A549 (cell line): ENCODE measurements at regions of chr12 and their contacts with region 1.

Region 1: GRCh38 chr12:10331642-10332239 is 24.1 kb downstream of the KLRD1 start:
- DNase-seq: peak; percentile 59 to 68
- ATAC-seq: peak; percentile 92 to 95
- H3K4me3 ChIP-seq: no peak overlapping the region
- H3K27ac ChIP-seq: no peak overlapping the region
- H3K4me1 ChIP-seq: no peaks in the 10 kb centered on the region
- CTCF ChIP-seq: peak; percentile 89
- EP300 ChIP-seq: no peak
- POLR2A ChIP-seq: no peak
- RAD21 ChIP-seq: peak; percentile 92 to 96

Region 2: GRCh38 chr12:10283027-10283426 is 48.7 kb before region 1 on chr12:
- CTCF ChIA-PET with region 1: no interaction called
- POLR2A ChIA-PET with region 1: no interaction called
- DNase-seq: no peak
- ATAC-seq: no peak
- H3K4me3 ChIP-seq: no peak overlapping the region
- H3K27ac ChIP-seq: no peak overlapping the region
- H3K4me1 ChIP-seq: no peaks in the 10 kb centered on the region
- CTCF ChIP-seq: no peak
- EP300 ChIP-seq: no peak
- POLR2A ChIP-seq: no peak
- RAD21 ChIP-seq: no peak

Region 3: DNA sequence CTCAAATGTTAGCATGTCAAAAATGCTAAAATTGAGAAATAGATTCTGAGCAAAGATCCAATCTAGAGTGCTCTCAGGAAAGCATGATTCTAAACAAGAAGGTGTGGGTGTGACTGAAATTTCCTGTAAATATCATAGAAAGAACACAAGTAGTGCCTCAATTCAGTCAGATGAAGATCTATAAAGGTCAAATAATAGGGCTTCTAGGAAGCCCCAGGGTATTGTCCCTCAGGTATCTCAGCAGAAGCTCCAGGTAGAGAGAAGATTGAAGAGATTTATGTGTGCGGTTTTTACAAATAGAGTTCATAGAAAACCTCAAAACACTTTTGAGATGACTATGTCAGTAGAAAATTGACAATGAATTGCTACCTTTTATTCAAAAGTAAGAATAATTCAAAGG is 11.1 kb before region 1 on chr12:
- CTCF ChIA-PET with region 1: interaction called, 11 read pairs
- POLR2A ChIA-PET with region 1: no interaction called
- DNase-seq: no peak
- ATAC-seq: no peak
- H3K4me3 ChIP-seq: no peak overlapping the region
- H3K27ac ChIP-seq: no peak overlapping the region
- H3K4me1 ChIP-seq: no peaks in the 10 kb centered on the region
- CTCF ChIP-seq: no peak
- EP300 ChIP-seq: no peak
- POLR2A ChIP-seq: no peak
- RAD21 ChIP-seq: no peak

Region 4: DNA sequence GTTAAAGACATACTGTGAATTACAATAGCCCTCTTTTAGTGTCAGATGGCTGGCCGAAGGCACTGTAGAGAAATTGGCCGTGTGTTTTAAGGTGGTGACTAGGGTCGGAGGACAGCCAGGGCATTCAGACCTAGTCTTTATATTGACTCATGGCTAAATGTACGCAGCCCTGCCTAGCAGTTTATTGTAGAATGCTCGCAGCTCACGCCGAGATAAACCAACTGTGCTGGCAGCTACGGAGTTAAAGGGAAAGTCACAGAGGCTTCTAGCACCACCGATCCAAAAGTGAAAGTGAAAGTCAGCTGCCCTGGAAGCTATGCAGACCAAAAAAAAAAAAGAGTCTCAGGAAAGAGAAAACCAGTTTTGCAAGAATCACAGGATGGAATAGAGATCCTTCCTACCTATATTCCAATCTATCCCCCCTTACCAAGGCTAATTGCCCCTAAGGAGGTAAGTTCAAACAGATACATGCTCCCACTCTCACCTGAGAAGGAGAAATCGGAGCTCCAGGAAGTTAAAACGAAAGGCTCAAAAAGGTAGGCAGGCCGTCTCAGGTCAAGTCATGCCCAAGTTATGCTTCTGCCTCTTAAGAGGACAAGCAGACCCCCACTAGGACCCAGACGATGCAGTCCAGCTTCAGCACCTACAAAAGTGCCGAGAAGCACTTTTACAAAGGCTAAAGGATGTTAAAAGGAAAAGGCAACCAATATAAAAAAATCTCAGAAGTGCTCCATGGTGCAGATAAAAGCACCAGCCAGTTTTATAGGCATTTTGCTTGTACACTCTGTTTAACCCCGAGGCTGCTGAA is 33.3 kb after region 1 on chr12:
- CTCF ChIA-PET with region 1: interaction called, 10 read pairs
- POLR2A ChIA-PET with region 1: no interaction called
- DNase-seq: peak; percentile 35 to 53
- ATAC-seq: peak; percentile 68 to 78
- H3K4me3 ChIP-seq: peak overlapping the region; percentile 54
- H3K27ac ChIP-seq: peak overlapping the region; percentile 71 to 87
- H3K4me1 ChIP-seq: peaks cover 15% of the 10 kb centered on the region; the same call in 2 of the 3 replicates
- CTCF ChIP-seq: no peak
- EP300 ChIP-seq: no peak
- POLR2A ChIP-seq: no peak
- RAD21 ChIP-seq: no peak

Region 5: GRCh38 chr12:10562306-10562933 is 230.7 kb after region 1 on chr12:
- CTCF ChIA-PET with region 1: interaction called, 26 read pairs
- POLR2A ChIA-PET with region 1: no interaction called
- DNase-seq: peak; percentile 13 to 53
- ATAC-seq: 0 out of 6 replicates have a peak, but pooled peaks of 1 of the 2 experiments have one; percentile 33
- H3K4me3 ChIP-seq: no peak overlapping the region
- H3K27ac ChIP-seq: no peak overlapping the region
- H3K4me1 ChIP-seq: 0 out of 3 replicates have a peak, but pooled peaks cover 3% of the 10 kb centered on the region
- CTCF ChIP-seq: peak; percentile 92
- EP300 ChIP-seq: no peak
- POLR2A ChIP-seq: no peak
- RAD21 ChIP-seq: peak; percentile 89 to 91

Region 6: GRCh38 chr12:10584415-10584814 is 252.7 kb after region 1 on chr12:
- CTCF ChIA-PET with region 1: no interaction called
- POLR2A ChIA-PET with region 1: no interaction called
- DNase-seq: no peak
- ATAC-seq: no peak
- H3K4me3 ChIP-seq: no peak overlapping the region
- H3K27ac ChIP-seq: no peak overlapping the region
- H3K4me1 ChIP-seq: no peaks in the 10 kb centered on the region
- CTCF ChIP-seq: no peak
- EP300 ChIP-seq: no peak
- POLR2A ChIP-seq: no peak
- RAD21 ChIP-seq: no peak